ENCODE measurements at regions of chr12 and their contacts with region 1.

Region 1: DNA sequence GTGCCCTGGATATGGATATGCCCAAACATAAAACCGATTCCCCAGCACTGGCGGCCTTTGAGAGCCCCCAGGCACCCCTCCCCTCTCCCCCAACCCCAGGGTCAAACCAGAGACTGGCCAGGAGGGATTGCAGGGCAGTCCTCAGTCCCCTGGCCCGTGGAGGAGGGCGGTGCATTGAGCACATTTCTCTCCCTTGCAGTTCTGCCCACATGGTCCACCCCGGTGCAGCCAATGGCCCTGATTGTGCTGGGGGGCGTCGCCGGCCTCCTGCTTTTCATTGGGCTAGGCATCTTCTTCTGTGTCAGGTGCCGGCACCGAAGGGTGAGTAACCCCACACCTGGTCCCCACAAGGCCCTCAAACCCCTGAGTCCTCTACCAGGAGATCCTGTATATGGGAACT is 3.4 kb upstream of the GPR162 start:
- DNase-seq: no peak
- ATAC-seq: no peak
- H3K4me3 ChIP-seq: no peak overlapping the region
- H3K27ac ChIP-seq: no peak overlapping the region
- H3K4me1 ChIP-seq: peaks cover 0 to 22% (median 13%) of the 10 kb centered on the region in 12 donors
- H3K27me3 ChIP-seq: peaks cover 0 to 12% (median 0%) of the 10 kb centered on the region in 9 donors
- CTCF ChIP-seq: no peak
- POLR2A ChIP-seq: no peak

Region 2: DNA sequence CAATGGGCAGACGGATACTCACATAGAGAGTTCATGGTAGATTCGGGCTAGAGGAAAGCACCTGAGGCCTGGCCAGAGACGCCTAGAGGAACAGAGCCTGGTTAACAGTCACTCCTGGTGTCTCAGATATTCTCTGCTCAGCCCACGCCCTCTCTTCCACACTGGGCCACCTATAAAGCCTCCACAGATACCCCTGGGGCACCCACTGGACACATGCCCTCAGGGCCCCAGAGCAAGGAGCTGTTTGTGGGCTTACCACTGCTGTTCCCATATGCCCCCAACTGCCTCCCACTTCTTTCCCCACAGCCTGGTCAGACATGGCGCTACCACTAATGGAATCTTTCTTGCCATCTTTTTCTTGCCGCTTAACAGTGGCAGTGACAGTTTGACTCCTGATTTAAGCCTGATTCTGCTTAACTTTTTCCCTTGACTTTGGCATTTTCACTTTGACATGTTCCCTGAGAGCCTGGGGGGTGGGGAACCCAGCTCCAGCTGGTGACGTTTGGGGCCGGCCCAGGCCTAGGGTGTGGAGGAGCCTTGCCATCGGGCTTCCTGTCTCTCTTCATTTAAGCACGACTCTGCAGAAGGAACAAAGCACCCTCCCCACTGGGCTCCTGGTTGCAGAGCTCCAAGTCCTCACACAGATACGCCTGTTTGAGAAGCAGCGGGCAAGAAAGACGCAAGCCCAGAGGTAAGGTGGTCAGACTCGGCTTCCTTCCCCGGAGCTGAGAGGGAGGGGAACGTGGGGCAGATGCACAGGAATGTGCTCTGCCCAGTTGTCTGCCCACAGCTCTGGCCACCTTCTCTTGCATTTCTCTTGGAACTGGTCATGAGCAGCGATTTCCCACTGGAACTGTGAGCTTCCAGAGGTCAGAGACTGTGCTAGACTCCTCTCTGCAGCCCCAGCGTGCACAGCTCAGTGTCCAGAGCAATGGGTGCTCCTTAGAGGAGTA is 29.0 kb before region 1 on chr12 and contains the start of gene CD4:
- intact Hi-C with region 1: loop called in 1 of 10 experiments (anchors 2 kb)
- DNase-seq: peak; percentile 63 to 86 (median 70)
- ATAC-seq: peak; percentile 34 to 87 (median 75)
- H3K4me3 ChIP-seq: peak within 1 kb of the TSS in 9 of 12 donors; percentile 5 to 65 (median 40)
- H3K27ac ChIP-seq: peak within 1 kb of the TSS in 6 of 12 donors; percentile 13 to 95 (median 52)
- H3K4me1 ChIP-seq: peaks cover 0 to 56% (median 2%) of the 10 kb centered on the region in 12 donors
- H3K27me3 ChIP-seq: peaks cover 0 to 4% (median 0%) of the 10 kb centered on the region in 9 donors
- CTCF ChIP-seq: no peak
- POLR2A ChIP-seq: peak in 1 of 2 donors; percentile 22
- total RNA-seq, gene CD4: 3.0 to 71.9 (median 5.4) TPM